Natural killer cell (primary cell): ENCODE measurements at regions of chr5 and their contacts with region 1.

Region 1: DNA sequence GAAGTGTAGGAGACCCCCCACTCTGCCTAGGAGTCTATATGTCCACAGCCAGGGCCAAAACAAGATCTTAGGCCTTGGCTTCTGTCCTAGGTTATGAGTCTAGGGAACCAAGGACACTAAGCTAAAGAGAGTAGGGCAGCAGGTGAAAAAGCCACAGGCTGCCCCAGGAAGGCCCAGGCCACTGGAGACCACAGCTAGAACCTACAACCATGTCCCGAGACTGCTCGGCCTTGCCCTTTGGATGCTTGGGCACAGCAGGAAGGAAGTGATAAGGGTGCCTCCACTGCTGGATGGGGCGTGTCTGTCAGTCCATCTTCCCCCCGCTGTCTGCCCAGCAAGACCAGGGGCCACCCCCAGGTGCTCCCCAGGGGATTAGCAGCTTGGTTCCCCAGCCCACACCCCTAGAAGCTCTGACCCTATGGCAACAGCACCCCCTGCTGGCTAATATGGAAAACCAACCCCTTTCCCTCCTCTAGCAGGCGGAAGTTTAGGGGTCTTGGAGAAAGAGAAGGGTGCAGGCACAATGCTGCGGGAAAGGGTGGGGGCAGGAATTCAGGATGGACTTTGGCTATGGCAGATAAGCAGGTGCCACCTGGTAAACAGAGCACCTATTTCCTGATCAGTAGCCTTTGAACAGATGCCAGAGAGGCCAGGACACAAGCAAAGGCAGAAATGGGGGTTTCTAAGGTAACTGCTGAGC is 10.5 kb upstream of the IRF1 start:
- DNase-seq: peak; percentile 68 to 92
- ATAC-seq: peak; percentile 47 to 62 (median 61)
- H3K4me3 ChIP-seq: no peak overlapping the region
- H3K4me3 Mint-ChIP-seq: no peak overlapping the region
- H3K27ac ChIP-seq: peak overlapping the region; percentile 53
- H3K27ac Mint-ChIP-seq: peak overlapping the region; percentile 95 to 100
- H3K4me1 ChIP-seq: peaks cover 50% of the 10 kb centered on the region
- H3K4me1 Mint-ChIP-seq: peaks cover 35 to 50% of the 10 kb centered on the region in 2 donors
- H3K27me3 ChIP-seq: no peaks in the 10 kb centered on the region
- H3K27me3 Mint-ChIP-seq: no peaks in the 10 kb centered on the region
- CTCF ChIP-seq: peak; percentile 84

Region 2: DNA sequence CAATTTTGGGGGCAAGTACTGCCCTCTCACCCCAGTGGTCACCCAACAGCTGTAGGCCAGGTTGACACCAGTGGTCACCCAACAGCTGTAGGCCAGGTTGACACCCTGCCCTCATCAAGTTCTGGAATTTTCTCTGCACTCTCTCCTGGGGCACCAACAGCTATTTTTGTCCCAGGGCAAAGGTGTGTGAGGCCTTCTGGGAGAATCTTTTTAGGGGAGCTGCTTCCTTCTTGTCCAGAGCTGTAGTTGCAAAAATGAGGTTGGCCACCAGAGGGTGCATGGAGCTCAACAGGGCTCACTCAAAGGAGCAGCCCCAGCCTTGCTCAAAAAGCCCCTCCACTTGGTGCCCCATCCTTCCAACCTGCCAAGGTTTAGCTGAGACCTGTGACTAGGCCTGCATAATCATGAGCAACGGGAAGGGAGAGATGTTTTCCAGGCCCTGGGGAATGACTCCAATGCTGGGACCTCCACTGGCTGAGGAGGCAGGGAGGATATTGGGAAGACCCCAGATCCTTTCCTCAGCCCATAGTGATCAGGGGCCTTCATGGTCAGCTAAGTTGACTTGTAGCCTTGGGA is 262.8 kb before region 1 on chr5:
- intact Hi-C with region 1: loop called (anchors 1 kb)
- DNase-seq: peak; percentile 63 to 78
- ATAC-seq: peak; percentile 67 to 90 (median 89)
- H3K4me3 ChIP-seq: no peak overlapping the region
- H3K4me3 Mint-ChIP-seq: no peak overlapping the region
- H3K27ac ChIP-seq: no peak overlapping the region
- H3K27ac Mint-ChIP-seq: no peak overlapping the region
- H3K4me1 ChIP-seq: no peaks in the 10 kb centered on the region
- H3K4me1 Mint-ChIP-seq: no peaks in the 10 kb centered on the region
- H3K27me3 ChIP-seq: no peaks in the 10 kb centered on the region
- H3K27me3 Mint-ChIP-seq: peaks cover 3 to 7% of the 10 kb centered on the region in 2 donors
- CTCF ChIP-seq: peak; percentile 81